ENCODE measurements at regions of chr12 and their contacts with region 1.

Region 1: DNA sequence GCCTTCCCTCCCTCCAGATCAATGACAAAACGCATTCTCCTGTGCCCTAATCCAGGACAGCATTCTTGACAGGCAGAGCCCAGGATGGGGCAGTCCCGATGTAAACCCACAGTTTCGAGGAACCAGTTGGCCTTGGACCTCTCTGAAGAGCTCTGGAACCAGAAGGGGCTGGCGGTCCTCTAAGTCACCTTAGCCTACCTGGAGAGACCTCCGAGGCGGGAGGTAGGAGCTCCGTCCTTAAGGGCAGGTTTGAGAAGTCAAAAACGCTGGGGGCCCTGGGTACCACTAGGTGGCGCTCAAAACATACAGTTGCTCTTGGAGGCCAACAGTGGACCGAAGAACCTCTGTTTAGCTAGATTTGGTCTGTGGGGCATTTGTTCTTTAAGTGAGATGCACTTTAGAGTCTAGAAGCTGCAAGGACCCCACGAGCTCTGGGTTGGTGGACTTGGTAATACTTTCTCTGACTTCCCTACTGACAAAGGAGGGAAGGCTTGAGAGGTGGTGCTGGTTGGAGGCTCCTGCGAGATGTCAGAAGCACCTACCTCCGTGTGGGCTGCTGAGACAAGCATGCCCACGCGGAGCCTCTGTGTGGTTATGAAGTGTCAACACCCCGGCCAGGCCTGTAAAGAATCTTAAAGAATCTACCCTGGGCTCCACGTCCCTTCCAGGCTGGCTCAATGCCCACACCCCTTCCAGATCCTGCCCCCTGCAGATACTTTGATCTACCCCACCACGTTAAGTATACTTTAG is 74.8 kb upstream of the CHST11 start:
- DNase-seq: peak; percentile 68
- ATAC-seq: peak; percentile 88
- H3K4me3 Mint-ChIP-seq: no peak overlapping the region
- H3K27ac Mint-ChIP-seq: no peak overlapping the region
- H3K4me1 Mint-ChIP-seq: peaks cover 9% of the 10 kb centered on the region
- H3K27me3 Mint-ChIP-seq: peaks cover 4% of the 10 kb centered on the region
- CTCF ChIP-seq: peak; percentile 29

Region 2: DNA sequence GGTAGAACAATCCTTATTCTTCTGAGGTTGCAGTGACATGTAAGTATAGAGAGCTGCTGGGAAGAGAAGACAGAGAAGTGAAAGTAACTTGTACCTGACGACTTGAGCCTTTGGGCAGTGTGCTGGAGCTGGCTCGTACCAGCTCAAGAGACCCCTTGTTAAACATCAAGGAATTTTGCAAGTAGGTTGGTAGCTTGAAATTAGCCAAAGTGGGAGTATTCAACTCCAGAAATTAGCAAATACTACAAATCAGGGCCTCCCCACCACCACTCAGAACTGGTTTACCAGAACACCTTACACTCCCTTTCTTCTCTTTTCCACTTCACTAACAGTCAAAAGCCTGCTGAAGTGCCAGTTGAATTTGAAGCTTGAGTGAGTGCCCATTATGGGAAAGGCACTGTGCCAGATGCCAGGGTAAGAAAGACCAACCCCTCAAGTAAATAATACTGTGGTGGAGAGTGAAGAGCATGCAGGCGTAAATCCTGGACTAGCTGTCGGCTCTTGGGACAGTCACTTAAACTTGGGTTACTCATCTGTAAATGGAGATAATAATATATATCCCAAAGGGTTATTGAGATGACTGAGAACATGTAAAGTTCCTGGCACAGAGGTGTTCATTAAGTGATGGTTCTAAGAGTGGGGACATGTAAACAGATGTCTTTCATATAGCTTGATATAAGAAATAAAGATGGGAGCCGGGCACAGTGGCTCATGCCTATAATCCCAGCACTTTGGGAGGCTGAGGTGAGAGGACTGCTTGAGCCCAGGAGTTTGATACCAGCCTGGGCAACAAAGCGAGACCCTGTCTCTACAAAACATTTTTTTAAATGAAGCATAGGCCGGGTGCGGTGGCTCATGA is 105.4 kb before region 1 on chr12:
- CTCF ChIA-PET with region 1: no interaction called
- POLR2A ChIA-PET with region 1: no interaction called
- intact Hi-C with region 1: no loop called
- DNase-seq: no peak
- ATAC-seq: peak; percentile 79
- H3K4me3 Mint-ChIP-seq: peak overlapping the region; percentile 85
- H3K27ac Mint-ChIP-seq: peak overlapping the region; percentile 70
- H3K4me1 Mint-ChIP-seq: peaks cover 13% of the 10 kb centered on the region
- H3K27me3 Mint-ChIP-seq: peaks cover 3% of the 10 kb centered on the region
- CTCF ChIP-seq: no peak

Region 3: GRCh38 chr12:104303538-104304151 is 78.3 kb before region 1 on chr12 and contains the start of gene EID3:
- CTCF ChIA-PET with region 1: no interaction called
- POLR2A ChIA-PET with region 1: no interaction called
- intact Hi-C with region 1: no loop called
- DNase-seq: peak; percentile 88
- ATAC-seq: peak; percentile 99
- H3K4me3 Mint-ChIP-seq: peak within 1 kb of the TSS; percentile 94
- H3K27ac Mint-ChIP-seq: peak within 1 kb of the TSS; percentile 93
- H3K4me1 Mint-ChIP-seq: peaks cover 37% of the 10 kb centered on the region
- H3K27me3 Mint-ChIP-seq: no peaks in the 10 kb centered on the region
- CTCF ChIP-seq: no peak
- total RNA-seq, gene EID3: 6.2 TPM in 2 replicates

Region 4: GRCh38 chr12:104411826-104412641 is 30.1 kb after region 1 on chr12:
- CTCF ChIA-PET with region 1: no interaction called
- POLR2A ChIA-PET with region 1: no interaction called
- intact Hi-C with region 1: no loop called
- DNase-seq: no peak
- ATAC-seq: peak; percentile 37
- H3K4me3 Mint-ChIP-seq: no peak overlapping the region
- H3K27ac Mint-ChIP-seq: no peak overlapping the region
- H3K4me1 Mint-ChIP-seq: peaks cover 19% of the 10 kb centered on the region
- H3K27me3 Mint-ChIP-seq: no peaks in the 10 kb centered on the region
- CTCF ChIP-seq: no peak

Region 5: DNA sequence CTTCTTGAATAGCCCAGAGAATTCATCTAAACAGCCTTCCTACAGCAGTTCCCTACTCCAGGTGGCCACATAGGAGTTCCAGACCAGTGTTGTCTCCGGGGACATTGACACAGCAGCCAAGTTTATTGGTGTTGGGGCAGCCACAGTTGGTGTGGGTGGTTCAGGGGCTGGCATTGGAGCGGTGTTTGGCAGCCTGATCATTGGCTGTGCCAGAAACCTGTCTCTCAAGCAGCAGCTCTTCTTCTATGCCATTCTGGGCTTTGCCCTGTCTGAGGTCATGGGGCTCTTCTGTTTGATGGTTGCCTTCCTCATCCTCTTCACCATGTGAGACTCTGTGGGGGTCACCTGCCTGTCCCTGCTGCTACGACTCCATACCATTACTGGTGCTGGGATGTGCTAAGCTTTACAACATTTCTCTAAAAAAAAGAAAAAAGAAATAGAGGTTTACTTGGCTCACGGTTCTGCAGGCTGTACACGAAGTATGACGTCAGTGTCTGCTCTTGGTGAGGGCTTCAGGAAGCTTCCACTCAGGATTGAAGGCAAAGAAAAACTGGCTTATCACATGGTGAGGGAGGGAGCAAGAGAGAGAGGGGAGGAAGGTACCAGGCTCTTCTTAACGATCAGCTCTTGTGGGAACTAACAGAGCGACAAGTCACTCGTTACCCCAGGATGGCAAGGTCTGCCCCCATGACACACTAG is 132.4 kb after region 1 on chr12:
- CTCF ChIA-PET with region 1: interaction called, 14 read pairs
- POLR2A ChIA-PET with region 1: no interaction called
- intact Hi-C with region 1: no loop called
- DNase-seq: no peak
- ATAC-seq: no peak
- H3K4me3 Mint-ChIP-seq: no peak overlapping the region
- H3K27ac Mint-ChIP-seq: no peak overlapping the region
- H3K4me1 Mint-ChIP-seq: peaks cover 71% of the 10 kb centered on the region
- H3K27me3 Mint-ChIP-seq: no peaks in the 10 kb centered on the region
- CTCF ChIP-seq: no peak

Region 6: DNA sequence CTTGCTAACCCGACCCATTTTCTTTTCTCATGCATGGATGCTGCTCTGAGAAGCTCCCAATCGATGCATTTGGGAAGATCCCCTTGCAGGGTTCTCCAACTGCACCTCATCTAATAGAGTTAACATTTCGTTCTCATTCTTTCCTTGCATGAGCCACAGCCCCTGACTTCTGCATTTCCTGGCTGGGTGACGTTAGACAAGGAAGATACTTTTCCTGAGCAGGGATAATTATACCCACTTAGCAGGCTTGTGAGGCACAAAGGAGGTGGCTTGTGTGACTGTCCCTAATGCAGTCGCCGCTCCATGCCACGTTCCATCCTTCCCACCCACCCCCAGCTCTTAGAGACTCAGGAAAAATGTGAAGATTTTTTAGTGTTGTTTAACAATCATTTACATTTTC is 269.9 kb after region 1 on chr12:
- CTCF ChIA-PET with region 1: interaction called, 11 read pairs
- POLR2A ChIA-PET with region 1: no interaction called
- intact Hi-C with region 1: no loop called
- DNase-seq: no peak
- ATAC-seq: no peak
- H3K4me3 Mint-ChIP-seq: no peak overlapping the region
- H3K27ac Mint-ChIP-seq: no peak overlapping the region
- H3K4me1 Mint-ChIP-seq: peaks cover 39% of the 10 kb centered on the region
- H3K27me3 Mint-ChIP-seq: no peaks in the 10 kb centered on the region
- CTCF ChIP-seq: no peak

Region 7: GRCh38 chr12:104720339-104721038 is 338.6 kb after region 1 on chr12:
- CTCF ChIA-PET with region 1: interaction called, 8 read pairs
- POLR2A ChIA-PET with region 1: interaction called, 3 read pairs
- intact Hi-C with region 1: loop called (anchors 5 kb)
- DNase-seq: peak; percentile 27
- ATAC-seq: peak; percentile 57
- H3K4me3 Mint-ChIP-seq: peak overlapping the region; percentile 75
- H3K27ac Mint-ChIP-seq: peak overlapping the region; percentile 77
- H3K4me1 Mint-ChIP-seq: peaks cover 62% of the 10 kb centered on the region
- H3K27me3 Mint-ChIP-seq: no peaks in the 10 kb centered on the region
- CTCF ChIP-seq: no peak

Region 8: DNA sequence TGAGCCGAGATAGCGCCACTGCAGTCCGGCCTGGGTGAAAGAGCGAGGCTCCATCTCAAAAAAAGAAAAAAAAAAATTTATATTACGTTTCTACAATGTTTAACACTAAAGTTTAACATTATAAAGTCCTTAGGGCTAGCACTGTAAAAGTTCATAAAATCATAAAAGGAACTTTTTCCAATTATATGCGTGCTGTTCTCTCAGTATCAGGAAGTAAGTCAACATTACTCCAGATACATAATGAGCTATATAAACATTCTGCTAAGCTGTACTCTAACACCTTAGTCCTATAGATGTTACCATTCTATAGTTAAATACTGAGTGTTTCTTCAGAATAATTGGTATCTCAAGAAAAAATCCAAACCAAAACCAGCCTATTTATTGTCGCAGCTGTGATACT is 543.6 kb after region 1 on chr12:
- CTCF ChIA-PET with region 1: no interaction called
- POLR2A ChIA-PET with region 1: no interaction called
- intact Hi-C with region 1: no loop called
- DNase-seq: no peak
- ATAC-seq: no peak
- H3K4me3 Mint-ChIP-seq: no peak overlapping the region
- H3K27ac Mint-ChIP-seq: no peak overlapping the region
- H3K4me1 Mint-ChIP-seq: peaks cover 12% of the 10 kb centered on the region
- H3K27me3 Mint-ChIP-seq: no peaks in the 10 kb centered on the region
- CTCF ChIP-seq: no peak

Region 9: GRCh38 chr12:104958009-104958945 is 576.4 kb after region 1 on chr12 and contains the start of gene SLC41A2:
- CTCF ChIA-PET with region 1: interaction called, 14 read pairs
- POLR2A ChIA-PET with region 1: interaction called, 3 read pairs
- intact Hi-C with region 1: loop called (anchors 1 kb)
- DNase-seq: peak; percentile 90
- ATAC-seq: peak; percentile 86
- H3K4me3 Mint-ChIP-seq: peak within 1 kb of the TSS; percentile 93
- H3K27ac Mint-ChIP-seq: peak within 1 kb of the TSS; percentile 92
- H3K4me1 Mint-ChIP-seq: peaks cover 26% of the 10 kb centered on the region
- H3K27me3 Mint-ChIP-seq: peaks cover 2% of the 10 kb centered on the region
- CTCF ChIP-seq: no peak
- total RNA-seq, gene SLC41A2: 11.1 and 12.6 TPM in 2 replicates

Measured in activated B cell treated with CpG ODN at 0.5 μM for 24 hours (primary cell).